ENCODE measurements at regions of chr9 and their contacts with region 1.

Region 1: DNA sequence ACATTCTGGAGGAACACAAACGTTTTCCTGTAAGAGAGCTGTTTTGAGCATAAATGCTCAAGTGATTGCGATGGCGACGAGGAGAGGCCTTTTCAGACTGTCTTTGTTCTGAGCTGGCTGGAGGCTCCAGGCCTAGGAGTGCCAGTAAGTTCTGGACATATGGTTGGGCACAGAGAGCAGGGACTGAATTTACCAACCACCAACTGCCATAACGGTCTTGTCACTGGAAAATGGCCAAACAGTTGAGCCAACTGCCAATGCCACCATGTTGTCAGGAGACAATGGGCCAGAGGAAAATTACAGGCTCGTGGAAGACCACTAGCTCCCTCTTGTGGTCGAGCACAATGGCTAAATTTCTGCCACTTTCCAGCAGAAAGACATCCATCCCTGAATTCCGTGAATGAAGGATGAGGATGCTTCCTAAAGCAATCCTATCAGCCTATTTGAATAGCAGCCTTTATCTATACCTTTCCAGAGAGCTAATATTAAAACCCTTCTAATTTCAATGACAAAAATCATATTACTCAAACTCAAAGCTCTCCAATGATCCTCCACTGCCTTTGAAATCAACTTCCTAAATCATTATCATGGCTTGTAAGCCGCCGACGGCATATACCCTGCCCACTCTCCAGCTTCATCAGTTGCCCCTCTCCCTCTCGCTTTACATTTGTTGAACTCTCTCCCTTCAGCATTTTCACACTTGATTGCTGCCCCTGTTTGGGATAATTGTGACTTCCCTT is 66.9 kb upstream of the GLIS3 start:
- DNase-seq: no peak
- ATAC-seq: no peak
- H3K4me3 Mint-ChIP-seq: no peak overlapping the region
- H3K27ac Mint-ChIP-seq: no peak overlapping the region
- H3K4me1 Mint-ChIP-seq: no peaks in the 10 kb centered on the region
- H3K27me3 Mint-ChIP-seq: peaks cover 10% of the 10 kb centered on the region

Region 2: DNA sequence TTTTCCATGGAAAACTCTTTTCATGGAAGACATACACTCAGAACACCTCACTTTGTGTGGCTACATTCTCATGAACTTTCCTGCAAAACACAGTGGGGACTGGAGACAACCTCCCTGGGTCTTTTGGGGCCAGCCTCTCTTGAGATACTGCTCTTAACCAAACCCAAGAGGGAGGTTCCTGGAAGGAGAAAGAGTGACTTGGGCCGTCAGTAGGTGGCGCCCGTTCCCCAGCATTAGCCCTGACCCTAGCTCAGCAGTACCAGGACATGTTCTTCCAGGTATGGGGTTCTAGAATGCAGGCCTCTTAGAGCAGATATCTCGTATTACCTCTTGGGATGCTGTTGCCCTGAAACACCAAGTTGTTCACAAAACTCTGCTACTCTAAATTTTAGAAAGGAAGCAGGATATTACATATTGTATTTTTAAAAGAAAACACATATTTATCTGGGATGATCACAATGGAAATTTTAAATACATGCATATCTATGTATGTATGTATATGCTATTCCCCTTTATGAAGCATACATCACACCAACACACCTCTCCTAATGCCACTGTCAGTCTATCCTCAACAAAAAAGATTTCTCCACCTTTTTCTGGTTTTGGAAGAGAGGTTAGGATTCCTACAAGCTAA is 51.1 kb before region 1 on chr9:
- CTCF ChIA-PET with region 1: interaction called, 67 read pairs
- DNase-seq: peak; percentile 80
- ATAC-seq: peak; percentile 84
- H3K4me3 Mint-ChIP-seq: no peak overlapping the region
- H3K27ac Mint-ChIP-seq: no peak overlapping the region
- H3K4me1 Mint-ChIP-seq: no peaks in the 10 kb centered on the region
- H3K27me3 Mint-ChIP-seq: peaks cover 24% of the 10 kb centered on the region

Region 3: DNA sequence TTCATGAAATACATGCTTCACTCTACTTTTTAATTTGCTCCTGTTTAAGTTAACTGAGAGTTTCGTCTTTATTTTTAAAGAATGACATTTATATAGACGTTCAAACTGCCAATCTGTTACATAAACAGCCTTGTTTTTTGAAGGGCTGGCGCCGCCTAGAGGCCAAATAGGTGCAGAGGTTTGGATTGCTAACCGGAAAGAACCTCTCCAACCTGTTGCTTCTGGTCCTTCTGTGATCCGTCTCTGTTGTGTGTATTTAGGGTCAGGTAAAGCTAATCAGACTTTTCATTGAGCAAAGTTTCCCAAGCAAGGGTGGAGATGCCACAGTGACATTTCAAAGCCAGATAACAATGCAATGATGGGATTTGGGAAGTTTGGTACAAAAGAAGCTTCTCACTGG is 27.4 kb before region 1 on chr9:
- CTCF ChIA-PET with region 1: interaction called, 11 read pairs
- DNase-seq: peak; percentile 85
- ATAC-seq: peak; percentile 86
- H3K4me3 Mint-ChIP-seq: no peak overlapping the region
- H3K27ac Mint-ChIP-seq: peak overlapping the region; percentile 66
- H3K4me1 Mint-ChIP-seq: peaks cover 3% of the 10 kb centered on the region
- H3K27me3 Mint-ChIP-seq: no peaks in the 10 kb centered on the region

Region 4: GRCh38 chr9:4349816-4350418 is 16.8 kb before region 1 on chr9:
- CTCF ChIA-PET with region 1: no interaction called
- DNase-seq: no peak
- ATAC-seq: no peak
- H3K4me3 Mint-ChIP-seq: no peak overlapping the region
- H3K27ac Mint-ChIP-seq: no peak overlapping the region
- H3K4me1 Mint-ChIP-seq: peaks cover 6% of the 10 kb centered on the region
- H3K27me3 Mint-ChIP-seq: peaks cover 1% of the 10 kb centered on the region

Region 5: DNA sequence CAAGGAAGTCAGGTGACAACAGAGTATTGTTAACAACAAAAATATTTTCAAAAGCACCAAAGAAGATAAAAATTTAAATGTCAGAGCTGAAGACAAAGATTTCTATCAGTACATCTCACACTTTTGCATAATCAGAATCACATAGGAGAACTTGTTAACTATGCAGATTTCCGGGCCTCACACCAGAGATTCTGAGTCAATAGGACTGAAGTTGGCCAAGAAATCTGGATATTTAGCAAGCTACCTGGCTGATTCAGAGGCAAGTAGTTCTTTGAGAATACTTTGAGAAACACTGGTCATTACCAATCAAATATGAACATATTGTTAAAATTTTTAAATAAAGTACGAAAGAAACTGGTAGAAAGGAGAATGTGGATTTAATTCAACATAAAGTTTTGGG is 13.6 kb after region 1 on chr9:
- CTCF ChIA-PET with region 1: interaction called, 13 read pairs
- DNase-seq: no peak
- ATAC-seq: no peak
- H3K4me3 Mint-ChIP-seq: no peak overlapping the region
- H3K27ac Mint-ChIP-seq: no peak overlapping the region
- H3K4me1 Mint-ChIP-seq: no peaks in the 10 kb centered on the region
- H3K27me3 Mint-ChIP-seq: peaks cover 27% of the 10 kb centered on the region

Region 6: GRCh38 chr9:4640027-4640426 is 273.3 kb after region 1 on chr9:
- CTCF ChIA-PET with region 1: interaction called, 10 read pairs
- DNase-seq: peak; percentile 67
- ATAC-seq: peak; percentile 64
- H3K4me3 Mint-ChIP-seq: no peak overlapping the region
- H3K27ac Mint-ChIP-seq: no peak overlapping the region
- H3K4me1 Mint-ChIP-seq: peaks cover 2% of the 10 kb centered on the region
- H3K27me3 Mint-ChIP-seq: peaks cover 4% of the 10 kb centered on the region

Region 7: GRCh38 chr9:4750023-4750673 is 383.4 kb after region 1 on chr9:
- CTCF ChIA-PET with region 1: no interaction called
- DNase-seq: no peak
- ATAC-seq: peak; percentile 68
- H3K4me3 Mint-ChIP-seq: no peak overlapping the region
- H3K27ac Mint-ChIP-seq: no peak overlapping the region
- H3K4me1 Mint-ChIP-seq: peaks cover 7% of the 10 kb centered on the region
- H3K27me3 Mint-ChIP-seq: peaks cover 2% of the 10 kb centered on the region

Measured in activated CD8-positive, alpha-beta memory T cell treated with anti-CD3 and anti-CD28 coated beads, Interleukin-2, amount 10 ng/mL, durations not matched to agents 7 days and 5 days (primary cell).